CD8-positive, alpha-beta T cell (primary cell): ENCODE measurements at regions of chr4 and their contacts with region 1.

Region 1: GRCh38 chr4:22515145-22515887 is 550 bp downstream of the ADGRA3 start:
- DNase-seq: peak in 6 of 9 experiments; percentile 4 to 48 (median 20)
- ATAC-seq: peak; percentile 67
- H3K4me3 ChIP-seq: peak overlapping the region; percentile 35 to 40
- H3K4me3 Mint-ChIP-seq: peak overlapping the region; percentile 92
- H3K27ac ChIP-seq: no peak overlapping the region
- H3K27ac Mint-ChIP-seq: no peak overlapping the region
- H3K4me1 ChIP-seq: peaks cover 4% of the 10 kb centered on the region
- H3K4me1 Mint-ChIP-seq: peaks cover 20% of the 10 kb centered on the region
- H3K27me3 ChIP-seq: no peaks in the 10 kb centered on the region
- H3K27me3 Mint-ChIP-seq: peaks cover 8% of the 10 kb centered on the region
- CTCF ChIP-seq: no peak

Region 2: DNA sequence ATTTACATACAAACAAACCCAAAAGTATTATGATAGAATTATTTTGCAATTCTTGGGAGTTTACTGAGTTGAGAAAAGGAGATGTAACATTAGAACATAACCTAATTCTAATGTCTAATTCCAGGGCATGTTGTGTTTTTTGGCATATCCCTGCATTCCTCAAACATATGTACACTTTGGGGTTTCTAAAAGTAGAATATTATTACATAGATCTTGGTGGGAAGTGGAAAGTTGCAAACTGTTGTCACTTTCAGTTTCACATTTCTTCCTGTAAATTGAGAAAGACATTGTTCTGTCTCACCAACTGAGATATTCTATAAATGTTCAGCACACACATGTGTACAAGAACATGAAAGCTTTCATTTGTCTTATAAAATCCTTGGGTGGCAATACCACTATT is 153.0 kb after region 1 on chr4:
- CTCF ChIA-PET with region 1: no interaction called
- POLR2A ChIA-PET with region 1: no interaction called
- intact Hi-C with region 1: loop called in 1 of 2 experiments (anchors 5 kb)
- DNase-seq: peak in 1 of 9 experiments; percentile 10
- ATAC-seq: no peak
- H3K4me3 ChIP-seq: peak overlapping the region in 1 of 2 experiments; percentile 25
- H3K4me3 Mint-ChIP-seq: peak overlapping the region; percentile 59
- H3K27ac ChIP-seq: peak overlapping the region in 1 of 2 experiments; percentile 38
- H3K27ac Mint-ChIP-seq: peak overlapping the region; percentile 83
- H3K4me1 ChIP-seq: peaks cover 38% of the 10 kb centered on the region
- H3K4me1 Mint-ChIP-seq: peaks cover 53% of the 10 kb centered on the region
- H3K27me3 ChIP-seq: no peaks in the 10 kb centered on the region
- H3K27me3 Mint-ChIP-seq: no peaks in the 10 kb centered on the region
- CTCF ChIP-seq: no peak

Region 3: GRCh38 chr4:22680065-22680642 is 164.8 kb after region 1 on chr4:
- CTCF ChIA-PET with region 1: no interaction called
- POLR2A ChIA-PET with region 1: no interaction called
- intact Hi-C with region 1: loop called in 1 of 2 experiments (anchors 5 kb)
- DNase-seq: no peak
- ATAC-seq: no peak
- H3K4me3 ChIP-seq: no peak overlapping the region
- H3K4me3 Mint-ChIP-seq: no peak overlapping the region
- H3K27ac ChIP-seq: no peak overlapping the region
- H3K27ac Mint-ChIP-seq: peak overlapping the region; percentile 16
- H3K4me1 ChIP-seq: peaks cover 26% of the 10 kb centered on the region
- H3K4me1 Mint-ChIP-seq: peaks cover 42% of the 10 kb centered on the region
- H3K27me3 ChIP-seq: no peaks in the 10 kb centered on the region
- H3K27me3 Mint-ChIP-seq: no peaks in the 10 kb centered on the region
- CTCF ChIP-seq: no peak